A549 (cell line): ENCODE measurements at regions of chr19 and their contacts with region 1.

Region 1: DNA sequence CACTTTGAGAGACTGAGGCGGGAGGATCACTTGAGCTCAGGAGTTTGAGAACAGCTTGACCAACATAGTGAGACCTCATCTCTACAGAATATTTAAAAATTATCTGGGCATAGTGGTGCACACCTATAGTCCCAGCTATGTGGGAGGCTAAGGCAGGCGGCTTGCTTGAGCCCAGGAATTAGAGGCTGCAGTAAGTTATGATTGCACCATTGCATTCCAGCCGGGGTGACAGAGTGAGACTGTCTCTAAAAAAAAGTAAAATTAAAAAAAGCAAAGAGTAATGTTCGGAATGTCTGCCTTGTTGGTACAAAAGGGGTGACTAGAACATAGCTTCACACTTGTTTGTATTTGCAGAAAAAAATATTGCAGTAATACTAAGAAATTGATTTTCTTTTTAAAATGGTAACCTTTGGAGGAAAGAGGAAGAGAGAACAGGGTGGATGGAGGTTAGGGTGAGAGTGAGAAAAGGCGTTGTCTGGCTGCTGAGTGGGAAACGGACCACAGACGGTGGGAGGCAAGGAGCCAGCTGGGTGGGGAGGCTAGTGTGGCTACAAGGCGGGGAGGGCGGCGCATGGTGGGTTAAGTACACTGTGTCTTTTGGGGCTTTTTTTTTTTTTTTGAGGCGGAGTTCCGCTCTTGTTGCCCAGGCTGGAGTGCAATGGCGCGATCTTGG is 10.2 kb downstream of the PPP1R14A start:
- DNase-seq: no peak
- ATAC-seq: no peak
- H3K4me3 ChIP-seq: no peak overlapping the region
- H3K27ac ChIP-seq: no peak overlapping the region
- H3K4me1 ChIP-seq: peaks cover 3% of the 10 kb centered on the region; the same call in 2 of the 3 replicates
- CTCF ChIP-seq: no peak
- EP300 ChIP-seq: no peak
- POLR2A ChIP-seq: no peak
- RAD21 ChIP-seq: no peak

Region 2: GRCh38 chr19:38263689-38264485 is 17.9 kb after region 1 on chr19:
- CTCF ChIA-PET with region 1: interaction called, 613 read pairs
- POLR2A ChIA-PET with region 1: interaction called, 3 read pairs
- DNase-seq: peak; percentile 78 to 87
- ATAC-seq: peak; percentile 64 to 66
- H3K4me3 ChIP-seq: peak overlapping the region; percentile 67
- H3K27ac ChIP-seq: peak overlapping the region; percentile 89 to 91
- H3K4me1 ChIP-seq: peaks cover 51% of the 10 kb centered on the region
- CTCF ChIP-seq: no peak
- EP300 ChIP-seq: no peak; a peak in 1 of 5 replicates
- POLR2A ChIP-seq: no peak
- RAD21 ChIP-seq: no peak; a peak in 1 of 5 replicates

Region 3: DNA sequence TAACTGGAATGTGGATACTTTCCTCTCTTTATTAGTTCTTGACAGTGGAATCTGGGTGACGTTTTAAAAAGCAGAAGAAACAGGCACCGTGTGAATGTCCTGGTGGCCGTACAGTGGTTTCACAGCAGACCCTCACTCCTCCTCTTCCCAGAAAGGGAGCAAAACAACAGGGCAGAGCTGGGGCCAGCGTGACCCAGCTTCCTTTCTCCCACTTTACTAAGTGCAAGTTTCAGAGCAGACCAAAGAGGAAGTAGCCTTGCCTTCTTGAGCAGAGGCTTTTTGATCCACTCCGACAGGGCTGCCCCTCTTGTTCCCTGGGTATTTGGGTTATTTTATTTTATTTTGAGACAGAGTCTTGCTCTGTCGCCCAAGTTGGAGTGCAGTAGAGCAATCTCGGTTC is 38.5 kb after region 1 on chr19:
- CTCF ChIA-PET with region 1: interaction called, 33 read pairs
- POLR2A ChIA-PET with region 1: no interaction called
- DNase-seq: no peak
- ATAC-seq: no peak
- H3K4me3 ChIP-seq: no peak overlapping the region
- H3K27ac ChIP-seq: no peak overlapping the region
- H3K4me1 ChIP-seq: peaks cover 7% of the 10 kb centered on the region; the same call in 1 of the 3 replicates
- CTCF ChIP-seq: no peak
- EP300 ChIP-seq: no peak
- POLR2A ChIP-seq: no peak
- RAD21 ChIP-seq: no peak

Region 4: GRCh38 chr19:38298821-38299567 is 53.0 kb after region 1 on chr19:
- CTCF ChIA-PET with region 1: interaction called, 19 read pairs
- POLR2A ChIA-PET with region 1: interaction called, 5 read pairs
- DNase-seq: no peak
- ATAC-seq: no peak
- H3K4me3 ChIP-seq: no peak overlapping the region
- H3K27ac ChIP-seq: peak overlapping the region; percentile 92 to 95
- H3K4me1 ChIP-seq: peaks cover 51% of the 10 kb centered on the region
- CTCF ChIP-seq: no peak
- EP300 ChIP-seq: no peak
- POLR2A ChIP-seq: no peak
- RAD21 ChIP-seq: no peak

Region 5: DNA sequence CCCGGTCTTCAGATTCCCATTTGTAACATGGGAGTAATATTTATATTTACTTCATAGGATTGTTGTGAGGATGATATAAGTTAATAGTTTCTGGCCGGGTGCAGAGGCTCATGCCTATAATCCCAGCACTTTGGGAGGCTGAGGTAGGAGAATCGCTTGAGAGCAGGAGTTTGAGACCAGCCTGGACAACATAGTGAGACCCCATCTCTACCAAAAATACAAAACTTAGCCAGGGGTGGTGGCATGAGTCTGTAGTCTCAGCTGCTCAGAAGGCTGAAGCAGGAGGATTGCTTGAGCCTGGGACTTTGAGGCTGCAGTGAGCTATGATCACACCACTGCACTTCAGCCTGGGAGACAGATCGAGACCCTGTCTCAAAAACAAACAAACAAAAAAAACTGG is 100.9 kb after region 1 on chr19:
- CTCF ChIA-PET with region 1: interaction called, 15 read pairs
- POLR2A ChIA-PET with region 1: no interaction called
- DNase-seq: no peak
- ATAC-seq: no peak
- H3K4me3 ChIP-seq: no peak overlapping the region
- H3K27ac ChIP-seq: no peak overlapping the region
- H3K4me1 ChIP-seq: no peaks in the 10 kb centered on the region
- CTCF ChIP-seq: no peak
- EP300 ChIP-seq: no peak
- POLR2A ChIP-seq: no peak
- RAD21 ChIP-seq: no peak

Region 6: GRCh38 chr19:38374429-38375176 is 128.6 kb after region 1 on chr19 and contains the start of gene PSMD8:
- CTCF ChIA-PET with region 1: interaction called, 43 read pairs
- POLR2A ChIA-PET with region 1: interaction called, 8 read pairs
- DNase-seq: peak; percentile 100
- ATAC-seq: peak; percentile 91 to 97
- H3K4me3 ChIP-seq: peak within 1 kb of the TSS; percentile 78
- H3K27ac ChIP-seq: peak within 1 kb of the TSS; percentile 88 to 91
- H3K4me1 ChIP-seq: peaks cover 17% of the 10 kb centered on the region
- CTCF ChIP-seq: peak; percentile 40
- EP300 ChIP-seq: no peak
- POLR2A ChIP-seq: peak; percentile 100
- RAD21 ChIP-seq: peak in 1 of 2 experiments; percentile 35; a peak in 3 of 5 replicates
- polyA plus RNA-seq, gene PSMD8: 437 and 469 TPM in 2 replicates